ENCODE measurements at regions of chr7 and their contacts with region 1.

Region 1: DNA sequence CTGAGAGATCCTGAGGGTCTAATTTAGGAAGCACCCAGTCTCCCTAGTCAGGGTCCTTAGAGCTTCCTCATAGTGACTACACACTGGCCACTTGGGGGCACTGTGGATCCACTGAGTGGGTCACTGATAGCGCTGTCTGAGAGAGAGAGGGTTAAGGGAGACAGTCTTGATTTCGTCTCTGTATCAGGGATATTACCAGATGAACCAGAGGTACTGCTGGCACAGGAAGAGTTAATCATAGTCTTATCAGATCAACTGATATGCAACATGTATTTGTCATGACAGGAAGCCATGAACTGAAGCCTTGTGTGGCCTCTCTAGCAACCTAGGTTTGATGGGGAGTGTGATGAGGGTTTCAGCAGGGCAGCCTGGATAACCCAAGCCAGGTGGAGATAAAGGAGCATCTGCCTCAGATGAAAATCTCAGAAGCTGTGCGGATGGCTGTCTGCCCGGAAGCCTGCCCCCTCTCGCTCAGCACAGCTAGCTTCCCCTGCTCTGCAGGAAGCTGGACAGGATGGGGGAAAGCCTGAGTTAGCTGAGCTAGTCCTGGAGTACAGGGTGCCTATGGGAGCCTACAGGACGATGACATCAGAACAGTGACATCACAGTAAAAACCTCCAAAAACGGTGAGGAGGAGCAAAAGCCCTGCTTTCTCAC is 214.0 kb upstream of the PRSS1 start:
- DNase-seq: peak; percentile 93
- H3K4me3 Mint-ChIP-seq: no peak overlapping the region
- H3K27ac Mint-ChIP-seq: no peak overlapping the region
- H3K4me1 Mint-ChIP-seq: peaks cover 21% of the 10 kb centered on the region
- H3K27me3 Mint-ChIP-seq: no peaks in the 10 kb centered on the region
- CTCF ChIP-seq: peak; percentile 93

Region 2: GRCh38 chr7:142459551-142459963 is 75.7 kb before region 1 on chr7:
- CTCF ChIA-PET with region 1: interaction called, 12 read pairs
- POLR2A ChIA-PET with region 1: no interaction called
- intact Hi-C with region 1: no loop called
- DNase-seq: peak; percentile 82
- H3K4me3 Mint-ChIP-seq: no peak overlapping the region
- H3K27ac Mint-ChIP-seq: no peak overlapping the region
- H3K4me1 Mint-ChIP-seq: peaks cover 10% of the 10 kb centered on the region
- H3K27me3 Mint-ChIP-seq: peaks cover 42% of the 10 kb centered on the region
- CTCF ChIP-seq: peak; percentile 65

Region 3: DNA sequence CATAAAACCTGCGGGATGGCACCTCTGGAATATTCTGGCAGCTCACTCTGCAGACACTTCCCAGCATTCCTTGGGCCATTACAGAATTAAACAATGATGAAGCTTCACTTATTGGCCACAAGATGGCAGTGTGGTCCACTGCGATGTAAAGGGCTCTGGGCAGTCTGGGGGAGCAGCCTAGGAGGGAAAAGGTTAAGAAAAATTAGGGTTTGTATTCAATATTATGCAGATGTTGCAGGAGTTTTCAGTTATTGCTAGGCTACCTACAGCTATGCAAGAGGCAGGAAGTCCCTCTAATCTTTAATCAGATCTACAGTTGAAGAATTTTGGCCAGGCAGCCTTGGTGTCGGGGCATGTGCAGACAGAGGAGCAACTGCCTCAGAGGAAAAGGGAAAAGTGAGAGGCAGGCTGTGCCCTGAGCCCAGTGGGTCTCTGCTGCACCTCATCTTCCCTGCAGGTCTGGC is 19.2 kb before region 1 on chr7:
- CTCF ChIA-PET with region 1: interaction called, 29 read pairs
- POLR2A ChIA-PET with region 1: no interaction called
- intact Hi-C with region 1: no loop called
- DNase-seq: peak; percentile 81
- H3K4me3 Mint-ChIP-seq: no peak overlapping the region
- H3K27ac Mint-ChIP-seq: no peak overlapping the region
- H3K4me1 Mint-ChIP-seq: peaks cover 20% of the 10 kb centered on the region
- H3K27me3 Mint-ChIP-seq: no peaks in the 10 kb centered on the region
- CTCF ChIP-seq: peak; percentile 80

Region 4: GRCh38 chr7:142557971-142558582 is 22.8 kb after region 1 on chr7:
- CTCF ChIA-PET with region 1: interaction called, 24 read pairs
- POLR2A ChIA-PET with region 1: interaction called, 3 read pairs
- intact Hi-C with region 1: no loop called
- DNase-seq: peak; percentile 78
- H3K4me3 Mint-ChIP-seq: peak overlapping the region; percentile 35
- H3K27ac Mint-ChIP-seq: peak overlapping the region; percentile 88
- H3K4me1 Mint-ChIP-seq: peaks cover 48% of the 10 kb centered on the region
- H3K27me3 Mint-ChIP-seq: no peaks in the 10 kb centered on the region
- CTCF ChIP-seq: peak; percentile 59

Region 5: DNA sequence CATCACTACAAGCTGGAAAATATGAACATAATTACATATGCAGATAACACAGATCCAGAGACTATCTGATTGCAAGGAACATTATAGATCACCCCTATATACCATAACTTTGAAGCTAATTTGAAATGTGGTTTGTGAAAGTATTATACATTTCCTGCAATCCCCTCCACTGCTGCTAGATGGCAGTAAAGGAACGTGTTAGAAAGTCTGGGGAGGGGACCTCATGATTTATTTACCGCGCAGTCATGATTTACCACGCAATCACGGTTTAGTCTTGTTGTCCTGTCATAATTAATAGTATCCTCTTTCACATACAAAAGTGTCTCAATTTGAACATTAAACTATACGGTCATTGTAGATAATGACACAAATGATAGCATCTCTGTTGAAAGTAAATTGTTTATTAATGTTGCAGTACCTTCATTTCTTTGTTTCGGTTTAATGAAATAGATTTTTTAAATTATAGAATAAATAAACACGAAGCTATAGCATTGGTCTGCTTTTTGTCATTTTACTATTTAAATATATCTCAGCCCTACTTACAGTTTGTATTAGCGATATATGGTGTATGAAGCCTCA is 68.7 kb after region 1 on chr7:
- CTCF ChIA-PET with region 1: interaction called, 63 read pairs
- POLR2A ChIA-PET with region 1: interaction called, 4 read pairs
- intact Hi-C with region 1: loop called (anchors 1 kb)
- DNase-seq: peak; percentile 71
- H3K4me3 Mint-ChIP-seq: peak overlapping the region; percentile 8
- H3K27ac Mint-ChIP-seq: no peak overlapping the region
- H3K4me1 Mint-ChIP-seq: peaks cover 14% of the 10 kb centered on the region
- H3K27me3 Mint-ChIP-seq: no peaks in the 10 kb centered on the region
- CTCF ChIP-seq: peak; percentile 83

Region 6: GRCh38 chr7:142632291-142633134 is 97.3 kb after region 1 on chr7:
- CTCF ChIA-PET with region 1: interaction called, 72 read pairs
- POLR2A ChIA-PET with region 1: interaction called, 4 read pairs
- intact Hi-C with region 1: loop called (anchors 1 kb)
- DNase-seq: peak; percentile 75
- H3K4me3 Mint-ChIP-seq: no peak overlapping the region
- H3K27ac Mint-ChIP-seq: no peak overlapping the region
- H3K4me1 Mint-ChIP-seq: peaks cover 11% of the 10 kb centered on the region
- H3K27me3 Mint-ChIP-seq: peaks cover 14% of the 10 kb centered on the region
- CTCF ChIP-seq: peak; percentile 61

Region 7: DNA sequence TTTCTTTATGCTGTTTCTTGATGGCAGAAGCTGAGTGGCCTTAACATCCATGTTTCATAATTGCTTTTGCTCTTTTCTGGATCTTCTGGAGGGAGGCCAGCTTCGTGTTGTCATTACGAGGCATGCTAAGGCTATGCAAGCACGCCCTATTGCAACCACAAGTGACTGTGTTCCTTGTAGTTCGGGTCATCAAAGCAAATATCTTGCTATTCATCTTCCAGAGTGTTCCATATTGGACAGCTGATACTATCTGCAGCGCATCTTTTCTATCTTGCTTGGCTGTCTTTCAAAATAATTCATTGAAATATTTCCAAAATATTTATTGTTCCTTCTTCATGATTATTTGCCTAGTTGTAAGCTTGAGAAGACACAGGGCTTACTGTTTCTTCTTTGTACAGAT is 324.6 kb after region 1 on chr7:
- CTCF ChIA-PET with region 1: interaction called, 3 read pairs
- POLR2A ChIA-PET with region 1: no interaction called
- intact Hi-C with region 1: loop called (anchors 2 kb)
- DNase-seq: peak; percentile 77
- H3K4me3 Mint-ChIP-seq: no peak overlapping the region
- H3K27ac Mint-ChIP-seq: no peak overlapping the region
- H3K4me1 Mint-ChIP-seq: peaks cover 26% of the 10 kb centered on the region
- H3K27me3 Mint-ChIP-seq: peaks cover 44% of the 10 kb centered on the region
- CTCF ChIP-seq: no peak

Measured in MCF 10A (cell line).